ENCODE measurements at regions of chr9 and their contacts with region 1.

Region 1: GRCh38 chr9:126704873-126705766 is 91.4 kb downstream of the LMX1B start:
- DNase-seq: peak; percentile 73
- H3K4me3 Mint-ChIP-seq: peak overlapping the region; percentile 9
- H3K27ac Mint-ChIP-seq: no peak overlapping the region
- H3K4me1 Mint-ChIP-seq: peaks cover 14% of the 10 kb centered on the region
- H3K27me3 Mint-ChIP-seq: peaks cover 24% of the 10 kb centered on the region

Region 2: GRCh38 chr9:126722252-126723078 is 17.3 kb after region 1 on chr9:
- intact Hi-C with region 1: loop called (anchors 2 kb)
- DNase-seq: peak; percentile 80
- H3K4me3 Mint-ChIP-seq: peak overlapping the region; percentile 85
- H3K27ac Mint-ChIP-seq: peak overlapping the region; percentile 68
- H3K4me1 Mint-ChIP-seq: peaks cover 35% of the 10 kb centered on the region
- H3K27me3 Mint-ChIP-seq: peaks cover 16% of the 10 kb centered on the region

Region 3: GRCh38 chr9:126745574-126746411 is 40.7 kb after region 1 on chr9:
- intact Hi-C with region 1: loop called (anchors 5 kb)
- DNase-seq: peak; percentile 7
- H3K4me3 Mint-ChIP-seq: peak overlapping the region; percentile 6
- H3K27ac Mint-ChIP-seq: peak overlapping the region; percentile 24
- H3K4me1 Mint-ChIP-seq: peaks cover 33% of the 10 kb centered on the region
- H3K27me3 Mint-ChIP-seq: peaks cover 7% of the 10 kb centered on the region

Region 4: DNA sequence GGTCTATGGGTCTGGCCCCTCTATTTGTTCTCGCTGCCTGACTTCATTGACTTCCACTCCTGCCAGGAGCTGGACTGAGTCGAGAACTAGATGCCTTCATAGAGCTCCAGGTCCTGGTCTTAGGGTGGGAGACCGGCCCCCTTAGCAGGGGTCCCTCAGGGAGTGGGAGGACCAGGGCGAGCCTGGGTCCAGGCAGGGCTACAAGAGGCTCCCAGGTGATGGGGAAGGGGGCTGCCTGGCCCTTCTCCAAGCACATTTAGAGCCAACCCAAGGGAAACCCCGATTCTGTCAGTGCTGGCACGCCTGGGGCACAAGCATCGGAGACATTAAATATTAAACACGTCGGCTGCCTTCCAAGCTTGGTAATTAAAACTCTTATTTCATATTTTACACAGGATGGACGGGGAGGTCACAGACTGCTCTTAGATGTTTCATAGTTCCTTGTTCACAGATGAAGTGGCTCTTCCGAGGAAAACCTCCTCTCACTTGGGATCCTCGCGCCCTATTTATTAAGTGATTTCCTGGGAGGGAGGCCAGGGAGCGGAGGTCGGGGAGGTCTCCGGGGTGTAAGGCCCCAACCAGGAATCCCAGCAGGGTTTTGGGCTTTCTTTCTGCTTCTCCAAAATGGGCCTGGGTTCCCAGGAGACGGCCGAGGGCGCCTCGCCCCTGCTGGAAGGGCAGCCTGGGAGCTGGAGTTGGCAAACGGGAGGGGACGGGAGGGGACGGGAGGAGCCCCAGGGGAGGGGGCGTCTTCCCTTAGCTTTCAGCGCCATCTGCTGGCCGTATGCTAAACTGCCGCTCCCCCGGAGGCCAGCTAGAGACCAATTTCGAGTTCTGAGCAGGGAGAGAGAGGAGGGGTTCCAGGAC is 76.3 kb after region 1 on chr9:
- intact Hi-C with region 1: loop called (anchors 1 kb)
- DNase-seq: peak; percentile 65
- H3K4me3 Mint-ChIP-seq: no peak overlapping the region
- H3K27ac Mint-ChIP-seq: no peak overlapping the region
- H3K4me1 Mint-ChIP-seq: no peaks in the 10 kb centered on the region
- H3K27me3 Mint-ChIP-seq: peaks cover 14% of the 10 kb centered on the region

Region 5: GRCh38 chr9:127214421-127215267 is 509.5 kb after region 1 on chr9:
- intact Hi-C with region 1: no loop called
- DNase-seq: peak; percentile 41
- H3K4me3 Mint-ChIP-seq: no peak overlapping the region
- H3K27ac Mint-ChIP-seq: no peak overlapping the region
- H3K4me1 Mint-ChIP-seq: peaks cover 2% of the 10 kb centered on the region
- H3K27me3 Mint-ChIP-seq: peaks cover 20% of the 10 kb centered on the region